Lower leg skin (tissue), 4 donors: ENCODE measurements at regions of chr12 and their contacts with region 1.

Region 1: DNA sequence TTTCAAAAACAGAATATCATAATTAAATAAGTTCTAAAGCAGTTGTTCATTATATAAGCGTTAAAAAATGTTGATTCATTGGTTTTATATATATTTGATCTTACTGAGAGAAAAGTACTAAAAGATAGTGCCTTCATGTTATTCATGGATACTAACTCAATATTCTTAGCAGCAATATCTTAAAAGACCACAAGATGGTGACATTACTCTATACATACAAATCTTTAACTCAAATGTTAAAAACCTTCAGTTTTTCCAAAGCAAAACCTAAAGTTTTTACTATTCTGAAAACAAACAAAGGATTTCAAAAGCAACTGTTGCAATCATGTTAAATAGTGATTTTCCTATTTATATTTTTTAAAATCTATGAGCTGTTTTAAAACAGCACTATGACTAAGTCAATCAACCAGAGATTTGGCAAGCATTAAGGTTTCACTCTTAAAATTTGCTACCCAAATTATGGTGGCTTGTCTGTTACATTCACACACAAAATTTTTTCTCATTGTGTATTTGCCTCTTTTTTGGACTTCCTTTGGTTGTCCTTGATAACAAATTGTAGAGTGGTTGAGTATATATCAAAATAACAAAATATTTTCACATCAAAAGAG is 50.1 kb upstream of the RERGL start:
- DNase-seq: no peak
- H3K4me3 ChIP-seq: no peak overlapping the region
- CTCF ChIP-seq: no peak
- POLR2A ChIP-seq: no peak

Region 2: DNA sequence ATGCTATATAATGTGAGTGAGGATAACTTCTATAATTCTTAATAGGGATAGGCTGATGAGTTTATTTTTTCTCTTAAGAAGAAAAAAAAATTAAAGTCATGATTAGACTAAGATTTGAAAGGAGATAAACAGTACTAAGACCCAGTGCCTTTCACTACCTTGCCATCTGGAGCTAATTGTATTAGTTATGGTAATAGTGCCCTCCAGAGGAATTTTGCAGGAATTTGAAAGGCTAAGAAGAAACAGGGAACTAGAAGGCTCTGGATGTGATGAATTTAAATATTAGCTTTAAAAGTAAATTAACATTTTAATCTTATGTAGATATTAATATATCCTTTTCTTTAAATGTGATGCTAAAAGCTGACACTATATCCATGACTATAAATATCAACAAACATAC is 84.7 kb after region 1 on chr12:
- intact Hi-C with region 1: loop called (anchors 2 kb)
- DNase-seq: no peak
- H3K4me3 ChIP-seq: no peak overlapping the region
- CTCF ChIP-seq: no peak
- POLR2A ChIP-seq: no peak